Calu3 (cell line): ENCODE measurements at regions of chr18 and their contacts with region 1.

Region 1: GRCh38 chr18:31206787-31207381 is 44.2 kb upstream of the DSC1 start:
- DNase-seq: peak; percentile 92
- H3K4me3 Mint-ChIP-seq: peak overlapping the region; percentile 54
- H3K27ac Mint-ChIP-seq: peak overlapping the region; percentile 74
- H3K4me1 Mint-ChIP-seq: peaks cover 68% of the 10 kb centered on the region
- H3K27me3 Mint-ChIP-seq: no peaks in the 10 kb centered on the region
- CTCF ChIP-seq: peak; percentile 32

Region 2: GRCh38 chr18:31010601-31011000 is 196.3 kb before region 1 on chr18:
- CTCF ChIA-PET with region 1: interaction called, 3 read pairs
- intact Hi-C with region 1: loop called (anchors 10 kb)
- DNase-seq: no peak
- H3K4me3 Mint-ChIP-seq: no peak overlapping the region
- H3K27ac Mint-ChIP-seq: no peak overlapping the region
- H3K4me1 Mint-ChIP-seq: peaks cover 8% of the 10 kb centered on the region
- H3K27me3 Mint-ChIP-seq: no peaks in the 10 kb centered on the region
- CTCF ChIP-seq: no peak

Region 3: DNA sequence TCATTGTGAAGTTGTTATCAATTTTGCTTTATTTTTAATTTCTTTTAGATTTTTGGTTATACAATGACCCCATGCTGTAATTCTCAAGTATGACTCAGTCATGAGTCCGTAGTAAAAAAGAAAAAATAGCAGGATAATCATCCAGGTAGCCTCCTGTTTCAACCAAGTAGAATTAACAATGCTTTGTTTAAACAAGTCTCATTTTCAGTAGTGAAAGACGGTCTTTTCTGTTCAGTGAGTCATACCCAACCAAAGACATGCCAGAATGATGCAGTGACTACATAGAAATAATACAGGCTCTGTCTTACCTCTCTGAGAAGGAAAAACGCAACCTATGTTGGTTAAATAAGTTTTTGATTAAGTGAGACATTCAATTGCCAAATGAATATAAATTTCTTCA is 23.6 kb after region 1 on chr18:
- CTCF ChIA-PET with region 1: interaction called, 4 read pairs
- intact Hi-C with region 1: loop called (anchors 2 kb)
- DNase-seq: peak; percentile 29
- H3K4me3 Mint-ChIP-seq: peak overlapping the region; percentile 14
- H3K27ac Mint-ChIP-seq: peak overlapping the region; percentile 96
- H3K4me1 Mint-ChIP-seq: peaks cover 85% of the 10 kb centered on the region
- H3K27me3 Mint-ChIP-seq: no peaks in the 10 kb centered on the region
- CTCF ChIP-seq: no peak

Region 4: DNA sequence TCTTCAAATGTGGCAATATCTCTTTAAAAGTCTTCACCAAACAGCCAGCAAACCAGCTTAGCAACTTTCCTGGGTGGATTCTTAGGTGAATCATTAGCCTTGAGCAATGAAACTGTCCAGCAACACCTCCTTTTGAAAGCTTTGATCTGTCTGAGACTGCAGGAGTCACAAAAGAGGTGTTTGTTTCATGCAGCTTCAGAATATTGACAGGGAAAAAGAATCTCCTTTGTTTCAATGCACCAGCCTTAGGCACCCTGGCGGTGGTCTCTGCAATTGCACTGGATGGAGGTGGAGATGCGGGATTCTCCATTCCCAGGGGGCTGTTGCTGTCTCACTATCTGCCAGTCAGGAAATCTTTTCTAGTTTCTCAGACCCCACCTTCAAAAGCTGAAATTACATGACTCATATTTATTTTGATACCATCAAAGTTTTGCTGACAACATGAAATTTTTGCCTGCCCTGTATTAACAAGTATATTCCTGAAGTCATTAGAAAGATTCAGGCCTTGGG is 35.1 kb after region 1 on chr18:
- CTCF ChIA-PET with region 1: interaction called, 8 read pairs
- intact Hi-C with region 1: loop called (anchors 2 kb)
- DNase-seq: peak; percentile 86
- H3K4me3 Mint-ChIP-seq: peak overlapping the region; percentile 30
- H3K27ac Mint-ChIP-seq: peak overlapping the region; percentile 92
- H3K4me1 Mint-ChIP-seq: peaks cover 65% of the 10 kb centered on the region
- H3K27me3 Mint-ChIP-seq: no peaks in the 10 kb centered on the region
- CTCF ChIP-seq: peak; percentile 92

Region 5: DNA sequence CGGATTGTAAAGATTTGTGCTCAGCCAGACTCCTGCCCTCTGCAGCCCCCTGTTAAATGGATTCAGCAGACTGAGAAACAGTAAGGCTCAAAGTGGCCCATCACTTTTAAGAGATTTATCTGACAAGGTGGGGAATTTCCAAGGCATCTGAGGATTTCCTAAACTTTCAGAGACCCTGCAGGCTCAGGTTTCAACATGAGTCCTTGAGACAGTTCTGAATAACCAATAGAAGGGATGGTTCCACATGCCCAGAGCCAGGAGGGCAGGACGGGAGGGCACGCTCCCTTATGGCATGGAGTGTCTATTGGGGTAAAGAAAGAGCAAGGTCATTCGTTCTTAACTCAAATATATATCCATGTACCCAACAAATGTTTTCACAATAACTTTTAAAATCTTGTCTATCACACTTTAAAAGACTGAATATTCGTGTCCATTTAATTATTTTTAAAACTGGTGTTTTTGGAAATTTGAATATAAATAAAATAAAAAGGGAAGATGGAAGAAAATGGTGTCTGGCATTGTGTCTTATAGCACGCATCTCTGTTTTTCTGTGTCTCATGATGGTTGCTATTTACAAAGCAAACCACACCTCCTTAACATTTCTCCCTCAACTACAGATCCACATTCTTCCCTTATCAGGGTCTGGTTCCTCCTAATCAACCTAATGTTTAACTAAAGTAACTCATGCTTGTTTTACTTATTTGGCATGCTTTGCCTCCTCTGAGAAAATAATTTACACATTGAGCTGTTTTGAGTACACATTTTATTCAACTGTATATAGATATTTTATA is 55.1 kb after region 1 on chr18:
- CTCF ChIA-PET with region 1: no interaction called
- intact Hi-C with region 1: loop called (anchors 5 kb)
- DNase-seq: peak; percentile 17
- H3K4me3 Mint-ChIP-seq: no peak overlapping the region
- H3K27ac Mint-ChIP-seq: peak overlapping the region; percentile 91
- H3K4me1 Mint-ChIP-seq: peaks cover 41% of the 10 kb centered on the region
- H3K27me3 Mint-ChIP-seq: no peaks in the 10 kb centered on the region
- CTCF ChIP-seq: no peak